GM12878 (cell line): ENCODE measurements at regions of chr1 and their contacts with region 1.

Region 1: GRCh38 chr1:54980528-54981241 is at the start of gene TMEM61:
- DNase-seq: no peak
- ATAC-seq: no peak
- H3K4me3 ChIP-seq: no peak within 1 kb of the TSS
- H3K27ac ChIP-seq: no peak within 1 kb of the TSS
- H3K4me1 ChIP-seq: no peaks in the 10 kb centered on the region
- H3K27me3 ChIP-seq: peaks cover 2 to 3% of the 10 kb centered on the region in 2 experiments; a peak in 2 of 4 replicates
- CTCF ChIP-seq: no peak
- EP300 ChIP-seq: no peak
- POLR2A ChIP-seq: no peak
- RAD21 ChIP-seq: no peak
- polyA plus RNA-seq, gene TMEM61: not detected

Region 2: DNA sequence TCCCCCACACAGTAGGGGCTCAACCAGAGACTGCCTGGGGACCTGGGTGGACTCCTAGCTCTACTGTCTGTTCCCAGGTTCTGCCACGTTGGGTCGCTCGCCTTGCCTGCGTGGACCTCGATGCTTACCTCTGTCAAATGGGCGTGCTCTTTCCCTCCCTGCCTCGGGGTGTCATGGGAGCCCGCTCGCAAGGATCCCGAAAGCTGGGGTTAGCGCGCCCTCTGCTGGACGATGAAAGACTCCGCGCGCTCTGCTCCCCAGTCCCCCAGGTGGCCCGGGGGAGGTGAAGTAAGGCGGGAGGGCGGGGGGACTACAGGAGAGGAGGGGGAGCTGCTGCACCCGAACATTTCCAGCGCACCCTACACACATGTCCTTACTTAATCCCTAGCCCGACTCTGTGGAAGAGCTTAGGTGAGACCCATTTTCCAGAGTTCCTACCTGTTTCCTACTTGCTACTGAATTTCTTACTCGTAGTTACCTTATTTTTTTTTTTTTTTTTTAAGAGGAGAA is 15.7 kb after region 1 on chr1:
- CTCF ChIA-PET with region 1: interaction called, 13 read pairs
- POLR2A ChIA-PET with region 1: no interaction called
- RAD21 ChIA-PET with region 1: no interaction called
- SMC1A ChIA-PET with region 1: interaction called, 3 read pairs
- in situ Hi-C with region 1: no loop called
- intact Hi-C with region 1: no loop called
- DNase-seq: no peak
- ATAC-seq: peak; percentile 97
- H3K4me3 ChIP-seq: no peak overlapping the region
- H3K27ac ChIP-seq: no peak overlapping the region
- H3K4me1 ChIP-seq: peaks cover 3% of the 10 kb centered on the region; the same call in 1 of the 2 replicates
- H3K27me3 ChIP-seq: peaks cover 2 to 5% of the 10 kb centered on the region in 2 experiments
- CTCF ChIP-seq: peak; percentile 59 to 88 (median 87)
- EP300 ChIP-seq: no peak
- POLR2A ChIP-seq: no peak
- RAD21 ChIP-seq: peak; percentile 97

Region 3: GRCh38 chr1:55034476-55035133 is 53.9 kb after region 1 on chr1:
- CTCF ChIA-PET with region 1: no interaction called
- POLR2A ChIA-PET with region 1: no interaction called
- RAD21 ChIA-PET with region 1: no interaction called
- SMC1A ChIA-PET with region 1: no interaction called
- in situ Hi-C with region 1: loop called (anchors 5 kb)
- intact Hi-C with region 1: no loop called
- DNase-seq: no peak
- ATAC-seq: no peak
- H3K4me3 ChIP-seq: no peak overlapping the region
- H3K27ac ChIP-seq: no peak overlapping the region
- H3K4me1 ChIP-seq: no peaks in the 10 kb centered on the region
- H3K27me3 ChIP-seq: peaks cover 5 to 13% of the 10 kb centered on the region in 2 experiments
- CTCF ChIP-seq: no peak
- EP300 ChIP-seq: no peak
- POLR2A ChIP-seq: no peak
- RAD21 ChIP-seq: no peak

Region 4: DNA sequence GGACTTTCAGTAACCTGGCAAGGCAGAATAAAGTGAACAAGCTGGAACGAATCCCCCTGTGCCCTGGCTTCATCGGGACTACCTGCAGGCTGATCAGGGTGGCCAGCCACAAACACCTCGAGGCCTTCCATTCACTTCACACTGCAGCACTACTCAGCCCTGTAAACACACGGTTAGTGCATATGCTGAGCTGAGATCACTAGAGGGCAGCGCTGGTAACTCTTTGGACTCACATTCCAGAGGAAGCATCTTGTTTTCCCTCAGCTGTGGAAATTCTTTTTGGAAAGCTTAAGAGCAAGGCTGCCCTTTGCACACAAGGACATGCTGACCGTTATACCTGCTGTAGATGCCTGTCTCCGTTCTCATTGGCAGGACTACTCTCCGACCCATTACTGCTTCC is 90.8 kb after region 1 on chr1:
- CTCF ChIA-PET with region 1: no interaction called
- POLR2A ChIA-PET with region 1: no interaction called
- RAD21 ChIA-PET with region 1: no interaction called
- SMC1A ChIA-PET with region 1: no interaction called
- in situ Hi-C with region 1: no loop called
- intact Hi-C with region 1: no loop called
- DNase-seq: no peak
- ATAC-seq: peak; percentile 64
- H3K4me3 ChIP-seq: no peak overlapping the region
- H3K27ac ChIP-seq: no peak overlapping the region
- H3K4me1 ChIP-seq: no peaks in the 10 kb centered on the region
- H3K27me3 ChIP-seq: no peaks in the 10 kb centered on the region
- CTCF ChIP-seq: peak; percentile 38 to 54 (median 53); a peak in 4 of 6 replicates
- EP300 ChIP-seq: no peak
- POLR2A ChIP-seq: no peak
- RAD21 ChIP-seq: 0 out of 2 replicates have a peak, but pooled peaks have one; percentile 7